ENCODE measurements at regions of chr12 and their contacts with region 1.

Region 1: GRCh38 chr12:12661086-12661485 is 34.9 kb downstream of the GPR19 start:
- H3K4me3 Mint-ChIP-seq: no peak overlapping the region
- H3K27ac Mint-ChIP-seq: no peak overlapping the region
- H3K4me1 Mint-ChIP-seq: no peaks in the 10 kb centered on the region
- H3K27me3 Mint-ChIP-seq: peaks cover 1% of the 10 kb centered on the region

Region 2: GRCh38 chr12:12376646-12377448 is 284.2 kb before region 1 on chr12:
- intact Hi-C with region 1: loop called (anchors 1 kb)
- H3K4me3 Mint-ChIP-seq: no peak overlapping the region
- H3K27ac Mint-ChIP-seq: no peak overlapping the region
- H3K4me1 Mint-ChIP-seq: peaks cover 36% of the 10 kb centered on the region
- H3K27me3 Mint-ChIP-seq: no peaks in the 10 kb centered on the region

Region 3: DNA sequence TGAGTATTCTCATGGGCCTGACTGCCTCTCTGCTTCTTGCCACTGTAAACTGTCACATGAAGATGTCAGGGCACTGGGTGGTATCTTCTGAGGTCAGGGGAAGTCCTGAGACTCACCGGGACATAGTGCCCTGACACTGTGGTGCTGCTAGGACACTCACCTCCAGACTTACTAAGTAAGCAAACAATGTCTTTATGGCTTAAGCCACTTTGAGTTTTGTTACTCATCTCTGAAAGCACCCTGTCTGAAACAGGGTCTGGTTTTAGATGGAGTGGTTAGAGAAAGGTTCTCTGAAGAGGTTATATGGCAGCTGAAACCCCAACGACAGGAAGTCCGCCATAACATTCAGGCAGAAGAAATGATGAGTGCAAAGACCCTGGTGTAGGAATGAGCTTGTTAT is 12.2 kb after region 1 on chr12:
- intact Hi-C with region 1: no loop called
- H3K4me3 Mint-ChIP-seq: no peak overlapping the region
- H3K27ac Mint-ChIP-seq: no peak overlapping the region
- H3K4me1 Mint-ChIP-seq: no peaks in the 10 kb centered on the region
- H3K27me3 Mint-ChIP-seq: no peaks in the 10 kb centered on the region